ENCODE measurements at regions of chr13 and their contacts with region 1.

Region 1: GRCh38 chr13:101082481-101082880 is 333.8 kb downstream of the NALCN start:
- DNase-seq: no peak
- H3K4me3 ChIP-seq: no peak overlapping the region
- H3K27ac ChIP-seq: no peak overlapping the region
- H3K4me1 ChIP-seq: no peaks in the 10 kb centered on the region
- H3K27me3 ChIP-seq: no peaks in the 10 kb centered on the region
- CTCF ChIP-seq: no peak
- POLR2A ChIP-seq: no peak

Region 2: GRCh38 chr13:102097708-102098107 is 1015.2 kb after region 1 on chr13:
- CTCF ChIA-PET with region 1: no interaction called
- POLR2A ChIA-PET with region 1: no interaction called
- dilution Hi-C with region 1: no loop called
- intact Hi-C with region 1: loop called (anchors 5 kb)
- DNase-seq: no peak
- H3K4me3 ChIP-seq: no peak overlapping the region
- H3K27ac ChIP-seq: no peak overlapping the region
- H3K4me1 ChIP-seq: no peaks in the 10 kb centered on the region
- H3K27me3 ChIP-seq: no peaks in the 10 kb centered on the region
- CTCF ChIP-seq: no peak
- POLR2A ChIP-seq: no peak